CD14-positive monocyte (primary cell): ENCODE measurements at regions of chr4 and their contacts with region 1.

Region 1: GRCh38 chr4:184649026-184649970 is at the starts of genes CASP3 and PRIMPOL:
- DNase-seq: peak; percentile 91
- H3K4me3 ChIP-seq: peak within 1 kb of the TSS; percentile 89 to 91 (median 89)
- H3K4me3 Mint-ChIP-seq: peak within 1 kb of the TSS; percentile 89 to 94
- H3K27ac ChIP-seq: peak within 1 kb of the TSS; percentile 72 to 88
- H3K27ac Mint-ChIP-seq: peak within 1 kb of the TSS; percentile 89 to 94 (median 91)
- H3K4me1 ChIP-seq: peaks cover 21 to 41% of the 10 kb centered on the region in 2 donors
- H3K4me1 Mint-ChIP-seq: peaks cover 50% of the 10 kb centered on the region
- H3K27me3 ChIP-seq: no peaks in the 10 kb centered on the region
- H3K27me3 Mint-ChIP-seq: peaks cover 0 to 1% (median 0%) of the 10 kb centered on the region in 3 donors
- CTCF ChIP-seq: no peak
- polyA plus RNA-seq, gene CASP3: 6.7 to 11.3 (median 11.1) TPM
- polyA plus RNA-seq, gene PRIMPOL: 7.0 to 10.5 (median 10.0) TPM

Region 2: GRCh38 chr4:184733654-184734524 is 84.6 kb after region 1 on chr4 and contains the start of gene CENPU:
- intact Hi-C with region 1: loop called (anchors 5 kb)
- DNase-seq: peak; percentile 90 to 95 (median 90)
- H3K4me3 ChIP-seq: peak within 1 kb of the TSS; percentile 73 to 95 (median 90)
- H3K4me3 Mint-ChIP-seq: peak within 1 kb of the TSS; percentile 91 to 97
- H3K27ac ChIP-seq: peak within 1 kb of the TSS; percentile 26 to 69
- H3K27ac Mint-ChIP-seq: peak within 1 kb of the TSS; percentile 76 to 90 (median 85)
- H3K4me1 ChIP-seq: peaks cover 10 to 24% of the 10 kb centered on the region in 2 donors
- H3K4me1 Mint-ChIP-seq: peaks cover 20% of the 10 kb centered on the region
- H3K27me3 ChIP-seq: no peaks in the 10 kb centered on the region
- H3K27me3 Mint-ChIP-seq: peaks cover 0 to 2% (median 0%) of the 10 kb centered on the region in 3 donors
- CTCF ChIP-seq: no peak
- polyA plus RNA-seq, gene CENPU: 1.2 to 1.6 (median 1.5) TPM